Activated naive CD4-positive, alpha-beta T cell treated with anti-CD3 and anti-CD28 coated beads, Interleukin-2, amount 10 ng/mL, durations not matched to agents 7 days and 5 days (primary cell): ENCODE measurements at regions of chr7 and their contacts with region 1.

Region 1: GRCh38 chr7:144835652-144836544 is at the start of gene TPK1:
- DNase-seq: peak; percentile 92
- H3K4me3 Mint-ChIP-seq: peak within 1 kb of the TSS; percentile 98
- H3K27ac Mint-ChIP-seq: peak within 1 kb of the TSS; percentile 100
- H3K4me1 Mint-ChIP-seq: peaks cover 44% of the 10 kb centered on the region
- H3K27me3 Mint-ChIP-seq: no peaks in the 10 kb centered on the region

Region 2: GRCh38 chr7:144738708-144739314 is 97.1 kb before region 1 on chr7:
- CTCF ChIA-PET with region 1: interaction called, 12 read pairs
- DNase-seq: peak; percentile 30
- H3K4me3 Mint-ChIP-seq: no peak overlapping the region
- H3K27ac Mint-ChIP-seq: no peak overlapping the region
- H3K4me1 Mint-ChIP-seq: no peaks in the 10 kb centered on the region
- H3K27me3 Mint-ChIP-seq: no peaks in the 10 kb centered on the region

Region 3: DNA sequence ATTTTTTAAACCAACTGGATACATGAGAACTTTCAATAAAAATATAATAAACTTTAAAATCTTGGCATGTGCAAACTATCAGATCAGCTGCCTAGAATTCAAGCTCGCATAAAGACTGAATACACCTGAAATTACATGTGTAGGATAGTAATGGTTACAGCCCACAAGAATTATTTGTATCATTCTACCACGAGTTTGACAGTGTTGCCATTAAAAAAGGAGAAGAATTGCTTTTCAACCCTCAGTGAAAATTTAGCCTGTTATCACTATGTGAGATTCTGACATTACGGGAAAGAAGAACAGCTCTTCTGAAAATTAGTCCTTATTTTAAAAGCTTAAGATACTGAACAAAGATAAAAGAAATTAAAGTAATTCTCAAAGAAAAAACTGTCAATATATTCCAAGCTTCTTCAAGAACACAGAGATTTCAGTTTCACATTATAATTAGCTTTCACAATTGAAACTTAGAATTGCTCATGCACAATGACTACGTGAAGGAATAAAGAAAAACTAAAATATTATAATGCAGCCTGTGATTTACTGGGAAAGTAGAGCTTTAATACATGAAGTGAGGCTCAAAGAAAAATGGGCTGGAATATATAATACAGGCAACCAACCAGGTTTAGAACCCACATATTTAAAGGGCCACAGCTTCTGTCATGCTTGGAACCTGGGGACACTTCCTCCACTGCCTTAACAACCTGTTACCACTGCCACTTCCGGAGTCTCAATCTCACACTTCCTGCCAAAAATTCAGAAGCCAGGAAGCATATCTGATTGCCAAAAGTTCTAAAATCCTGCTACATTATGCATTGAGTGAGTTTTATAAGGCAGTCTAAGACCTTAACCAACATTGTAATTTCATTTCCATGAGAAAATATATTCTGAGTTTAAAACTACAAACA is 23.3 kb before region 1 on chr7:
- CTCF ChIA-PET with region 1: interaction called, 14 read pairs
- DNase-seq: peak; percentile 70
- H3K4me3 Mint-ChIP-seq: peak overlapping the region; percentile 49
- H3K27ac Mint-ChIP-seq: peak overlapping the region; percentile 92
- H3K4me1 Mint-ChIP-seq: peaks cover 46% of the 10 kb centered on the region
- H3K27me3 Mint-ChIP-seq: no peaks in the 10 kb centered on the region

Region 4: GRCh38 chr7:144821067-144821466 is 14.8 kb before region 1 on chr7:
- CTCF ChIA-PET with region 1: interaction called, 17 read pairs
- DNase-seq: no peak
- H3K4me3 Mint-ChIP-seq: no peak overlapping the region
- H3K27ac Mint-ChIP-seq: no peak overlapping the region
- H3K4me1 Mint-ChIP-seq: peaks cover 62% of the 10 kb centered on the region
- H3K27me3 Mint-ChIP-seq: no peaks in the 10 kb centered on the region

Region 5: GRCh38 chr7:144885478-144885877 is 49.6 kb after region 1 on chr7:
- CTCF ChIA-PET with region 1: no interaction called
- DNase-seq: no peak
- H3K4me3 Mint-ChIP-seq: no peak overlapping the region
- H3K27ac Mint-ChIP-seq: no peak overlapping the region
- H3K4me1 Mint-ChIP-seq: no peaks in the 10 kb centered on the region
- H3K27me3 Mint-ChIP-seq: no peaks in the 10 kb centered on the region

Region 6: DNA sequence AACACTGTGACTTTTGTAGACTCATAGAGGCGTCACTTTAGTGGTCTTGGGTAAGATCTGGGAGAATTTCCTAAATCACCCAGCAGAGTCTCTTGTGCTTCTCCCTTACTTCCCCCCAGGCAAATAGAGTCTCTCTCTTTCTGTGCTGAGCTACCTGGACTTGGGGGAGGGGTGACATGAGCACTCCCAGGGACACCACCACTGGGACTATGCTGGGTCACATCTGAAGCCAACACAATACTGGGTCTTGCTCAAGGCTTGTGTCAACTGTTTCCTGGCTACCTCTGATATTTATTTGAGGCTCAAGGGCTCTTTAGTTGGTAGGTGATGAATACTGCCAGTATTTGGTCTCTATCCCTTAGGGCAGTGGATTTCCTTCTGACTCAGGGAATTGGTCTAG is 214.5 kb after region 1 on chr7:
- CTCF ChIA-PET with region 1: no interaction called
- DNase-seq: no peak
- H3K4me3 Mint-ChIP-seq: no peak overlapping the region
- H3K27ac Mint-ChIP-seq: no peak overlapping the region
- H3K4me1 Mint-ChIP-seq: no peaks in the 10 kb centered on the region
- H3K27me3 Mint-ChIP-seq: no peaks in the 10 kb centered on the region